ENCODE measurements at regions of chr14 and their contacts with region 1.

Region 1: DNA sequence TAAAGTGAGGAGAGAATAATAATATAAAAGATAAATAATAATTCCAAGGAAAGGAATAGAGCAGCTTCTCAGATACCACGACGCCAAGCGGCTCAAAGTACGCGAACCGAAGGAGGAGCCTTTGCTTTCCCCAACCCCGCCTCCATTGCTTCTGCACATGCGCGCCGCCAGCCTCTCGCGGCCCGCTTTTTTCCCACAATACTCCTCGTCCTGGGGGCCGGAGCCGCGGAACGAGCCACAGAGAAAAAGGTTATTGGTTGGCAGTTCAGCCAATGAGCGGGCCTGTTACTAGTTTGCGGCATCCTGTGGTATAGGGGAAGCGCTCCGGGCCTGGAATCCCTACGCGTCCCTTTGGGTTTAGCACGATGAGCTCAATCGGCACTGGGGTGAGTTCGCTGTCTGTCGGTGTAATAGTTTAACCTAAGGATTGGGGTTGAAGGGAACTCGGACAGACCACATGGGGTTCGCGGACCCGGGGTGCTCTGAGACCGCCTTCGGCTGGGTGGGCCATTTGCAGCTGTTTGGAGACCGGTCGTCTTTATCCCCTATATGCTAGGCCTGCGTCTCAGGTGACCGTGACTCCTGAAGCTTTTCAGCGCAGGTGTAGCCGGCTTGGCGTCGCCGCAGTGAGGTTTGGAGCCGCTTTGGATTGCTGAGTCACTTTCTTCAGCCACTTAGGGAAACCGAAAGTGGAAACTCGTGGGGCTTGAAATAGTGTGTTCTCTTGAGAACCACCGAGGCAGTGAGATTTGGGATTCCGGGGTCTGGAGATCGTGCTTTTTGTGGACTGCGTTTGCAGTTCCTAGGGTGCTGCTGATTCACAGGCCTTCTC is at the start of gene PSMA3:
- DNase-seq: peak; percentile 92 to 98 (median 96)
- H3K4me3 ChIP-seq: peak within 1 kb of the TSS; percentile 63 to 99 (median 90)
- H3K27ac ChIP-seq: peak within 1 kb of the TSS; percentile 74 to 98 (median 93)
- H3K27me3 ChIP-seq: no peaks in the 10 kb centered on the region
- CTCF ChIP-seq: peak in 44 of 56 donors; percentile 5 to 64 (median 35)
- total RNA-seq, gene PSMA3: 45.6 to 146 (median 80.0) TPM

Region 2: GRCh38 chr14:57845802-57846531 is 398.8 kb before region 1 on chr14:
- intact Hi-C with region 1: no loop called
- DNase-seq: no peak
- H3K4me3 ChIP-seq: no peak overlapping the region
- H3K27ac ChIP-seq: no peak overlapping the region
- H3K27me3 ChIP-seq: peaks cover 0 to 9% (median 0%) of the 10 kb centered on the region in 45 donors
- CTCF ChIP-seq: no peak

Region 3: GRCh38 chr14:58427281-58428117 is 182.7 kb after region 1 on chr14 and contains the starts of genes KIAA0586 and TIMM9:
- intact Hi-C with region 1: loop called in 1 of 2 experiments (anchors 5 kb)
- DNase-seq: peak; percentile 83 to 94 (median 92)
- H3K4me3 ChIP-seq: peak within 1 kb of the TSS; percentile 62 to 99 (median 88)
- H3K27ac ChIP-seq: peak within 1 kb of the TSS; percentile 66 to 99 (median 96)
- H3K27me3 ChIP-seq: no peaks in the 10 kb centered on the region
- CTCF ChIP-seq: peak in 21 of 56 donors; percentile 4 to 45 (median 15)
- total RNA-seq, gene KIAA0586: 18.8 to 46.5 (median 25.8) TPM
- total RNA-seq, gene TIMM9: 16.1 to 43.0 (median 30.2) TPM

Measured in dorsolateral prefrontal cortex (tissue), 120 donors.